Sciatic nerve (tissue), 2 donors: ENCODE measurements at regions of chr5 and their contacts with region 1.

Region 1: DNA sequence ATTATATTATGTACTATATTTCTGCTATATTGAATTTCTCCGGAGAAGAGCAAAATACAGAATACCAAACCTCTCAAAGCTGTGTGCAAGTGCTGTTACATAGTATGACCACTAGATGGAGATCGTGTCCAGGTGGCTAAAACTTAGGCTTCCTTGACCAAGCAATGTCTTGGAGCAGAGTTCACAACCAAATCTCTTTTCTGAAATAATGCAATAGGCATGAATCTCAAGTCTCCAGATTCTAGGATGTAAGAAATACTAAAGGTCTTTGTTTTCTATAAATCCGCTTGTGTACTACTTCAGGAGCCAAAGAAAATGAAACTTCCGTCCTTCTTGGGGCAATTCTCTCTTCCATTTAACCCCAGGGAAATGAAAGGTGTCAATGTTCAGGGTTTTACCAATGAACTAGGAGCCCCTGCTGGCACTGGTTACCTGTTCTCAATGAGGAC is 181.5 kb upstream of the RAI14 start:
- DNase-seq: no peak
- ATAC-seq: peak; percentile 93

Region 2: DNA sequence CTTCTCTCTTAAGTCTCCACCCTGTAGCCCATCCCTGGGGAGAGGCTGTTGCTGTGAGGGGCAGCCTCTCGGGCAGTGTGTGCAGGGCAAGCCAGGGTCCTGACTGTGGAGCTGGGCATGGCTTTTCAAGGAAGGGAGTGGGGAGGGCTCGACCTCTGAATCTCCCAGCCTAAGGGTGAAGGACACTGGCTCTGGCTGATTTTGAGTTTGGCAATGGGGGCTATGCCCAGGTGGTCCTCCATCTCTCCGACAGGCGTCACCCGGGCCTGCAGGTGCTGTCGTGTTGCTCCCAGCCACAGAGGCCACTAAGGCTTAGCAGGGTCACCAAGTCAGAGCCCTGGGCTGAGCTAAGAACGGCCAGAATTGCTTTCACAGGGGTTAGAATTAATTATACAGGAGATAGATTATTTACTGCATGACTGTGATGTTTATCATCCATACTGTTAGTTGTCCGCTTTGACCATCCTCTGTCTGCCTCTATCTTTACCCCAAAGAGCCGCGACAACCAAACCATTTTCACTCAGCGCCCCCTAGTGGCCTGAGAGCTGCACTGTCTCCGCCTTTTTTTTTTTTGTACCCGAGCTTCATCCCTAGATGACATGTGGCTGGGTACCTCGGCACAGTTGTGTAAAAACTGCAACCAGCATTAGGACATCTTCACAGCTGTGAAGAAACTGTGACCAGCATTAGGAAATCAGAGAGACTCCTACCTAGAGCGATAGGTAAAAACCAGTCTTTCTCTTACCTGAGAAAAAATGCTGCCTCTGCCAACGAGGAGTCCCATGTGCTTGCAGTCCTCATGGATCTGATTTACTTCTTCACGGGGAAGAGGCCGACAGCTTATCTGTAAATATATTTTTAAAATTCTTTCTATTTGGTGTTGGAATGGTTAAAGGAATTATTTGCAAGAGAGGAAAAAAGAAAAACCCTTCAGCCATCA is 528.7 kb after region 1 on chr5:
- intact Hi-C with region 1: loop called (anchors 10 kb)
- DNase-seq: peak; percentile 80
- ATAC-seq: peak; percentile 75